RWPE1 (cell line): ENCODE measurements at regions of chr5 and their contacts with region 1.

Region 1: DNA sequence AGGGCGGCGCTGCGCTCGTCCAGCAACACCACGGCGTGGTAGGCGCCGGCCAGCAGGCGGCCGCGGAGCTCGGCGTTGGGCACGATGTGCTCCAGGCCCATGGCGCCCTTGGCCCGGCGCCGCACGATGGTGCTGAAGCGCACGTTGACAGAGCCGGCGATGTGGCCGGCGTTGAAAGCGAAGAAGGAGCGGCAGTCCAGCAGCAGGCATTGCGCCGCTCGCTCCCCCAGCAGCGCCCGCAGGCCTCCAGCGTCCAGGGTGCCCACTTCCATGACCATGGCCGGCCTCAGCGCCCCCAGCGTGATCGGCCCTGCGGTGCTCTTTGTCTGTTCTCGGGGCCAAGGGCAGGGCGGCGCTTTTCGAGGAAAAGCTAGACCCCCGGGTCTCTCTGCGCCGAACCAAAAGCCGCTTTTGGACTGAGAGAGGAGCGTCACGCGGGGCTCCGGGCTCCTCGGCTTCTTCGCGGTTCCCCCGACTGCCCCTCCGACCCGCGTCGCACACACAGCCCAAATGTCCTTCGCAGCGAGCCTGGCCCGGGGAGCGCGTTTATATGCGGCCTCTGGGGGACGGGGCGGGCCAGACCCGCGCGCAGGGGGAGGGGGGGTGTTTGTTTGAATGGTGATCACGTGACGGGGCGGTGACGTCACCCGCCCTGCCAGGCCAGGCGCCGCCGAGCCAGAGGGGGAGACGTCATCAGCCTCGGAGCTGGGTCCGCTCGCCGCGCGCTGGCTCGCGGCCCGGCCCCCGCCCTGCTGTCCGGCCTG is at the start of gene DUSP1:
- DNase-seq: peak; percentile 100
- H3K27ac ChIP-seq: peak within 1 kb of the TSS; percentile 100
- CTCF ChIP-seq: no peak; the same call in 1 of the 2 replicates

Region 2: DNA sequence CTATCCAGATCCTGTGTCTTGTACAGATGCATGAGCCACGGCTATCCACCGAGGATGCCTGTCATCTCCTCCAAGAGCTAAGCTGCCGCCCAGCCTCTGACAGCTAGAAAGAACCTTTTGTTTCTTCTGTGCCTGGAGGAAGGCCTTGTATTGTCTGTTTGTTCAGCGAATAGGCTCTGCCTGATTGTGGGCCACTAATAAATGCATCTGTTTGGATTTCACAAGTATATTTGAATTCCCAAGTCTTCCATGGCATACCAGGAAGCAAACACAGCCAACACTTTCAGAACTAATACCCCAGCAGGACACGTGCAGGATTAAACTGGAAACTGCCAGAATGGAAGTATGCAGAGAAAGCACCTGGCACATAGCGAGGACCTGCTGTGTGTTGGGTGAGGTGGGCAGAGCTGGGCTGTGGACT is 222.5 kb before region 1 on chr5:
- CTCF ChIA-PET with region 1: no interaction called
- POLR2A ChIA-PET with region 1: no interaction called
- DNase-seq: no peak
- H3K27ac ChIP-seq: no peak overlapping the region
- CTCF ChIP-seq: no peak

Region 3: GRCh38 chr5:172646716-172647285 is 124.1 kb before region 1 on chr5:
- CTCF ChIA-PET with region 1: no interaction called
- POLR2A ChIA-PET with region 1: no interaction called
- DNase-seq: no peak
- H3K27ac ChIP-seq: peak overlapping the region; percentile 71
- CTCF ChIP-seq: no peak

Region 4: GRCh38 chr5:172733131-172733973 is 37.5 kb before region 1 on chr5:
- CTCF ChIA-PET with region 1: interaction called, 20 read pairs
- POLR2A ChIA-PET with region 1: interaction called, 9 read pairs
- DNase-seq: peak; percentile 97
- H3K27ac ChIP-seq: peak overlapping the region; percentile 100
- CTCF ChIP-seq: no peak

Region 5: GRCh38 chr5:172904643-172905347 is 133.9 kb after region 1 on chr5:
- CTCF ChIA-PET with region 1: interaction called, 15 read pairs
- POLR2A ChIA-PET with region 1: interaction called, 10 read pairs
- DNase-seq: peak; percentile 97
- H3K27ac ChIP-seq: peak overlapping the region; percentile 100
- CTCF ChIP-seq: no peak

Region 6: GRCh38 chr5:172932313-172933017 is 161.6 kb after region 1 on chr5:
- CTCF ChIA-PET with region 1: interaction called, 54 read pairs
- POLR2A ChIA-PET with region 1: interaction called, 4 read pairs
- DNase-seq: peak; percentile 85
- H3K27ac ChIP-seq: peak overlapping the region; percentile 79
- CTCF ChIP-seq: peak; percentile 99